Calu3 (cell line): ENCODE measurements at regions of chr17 and their contacts with region 1.

Region 1: DNA sequence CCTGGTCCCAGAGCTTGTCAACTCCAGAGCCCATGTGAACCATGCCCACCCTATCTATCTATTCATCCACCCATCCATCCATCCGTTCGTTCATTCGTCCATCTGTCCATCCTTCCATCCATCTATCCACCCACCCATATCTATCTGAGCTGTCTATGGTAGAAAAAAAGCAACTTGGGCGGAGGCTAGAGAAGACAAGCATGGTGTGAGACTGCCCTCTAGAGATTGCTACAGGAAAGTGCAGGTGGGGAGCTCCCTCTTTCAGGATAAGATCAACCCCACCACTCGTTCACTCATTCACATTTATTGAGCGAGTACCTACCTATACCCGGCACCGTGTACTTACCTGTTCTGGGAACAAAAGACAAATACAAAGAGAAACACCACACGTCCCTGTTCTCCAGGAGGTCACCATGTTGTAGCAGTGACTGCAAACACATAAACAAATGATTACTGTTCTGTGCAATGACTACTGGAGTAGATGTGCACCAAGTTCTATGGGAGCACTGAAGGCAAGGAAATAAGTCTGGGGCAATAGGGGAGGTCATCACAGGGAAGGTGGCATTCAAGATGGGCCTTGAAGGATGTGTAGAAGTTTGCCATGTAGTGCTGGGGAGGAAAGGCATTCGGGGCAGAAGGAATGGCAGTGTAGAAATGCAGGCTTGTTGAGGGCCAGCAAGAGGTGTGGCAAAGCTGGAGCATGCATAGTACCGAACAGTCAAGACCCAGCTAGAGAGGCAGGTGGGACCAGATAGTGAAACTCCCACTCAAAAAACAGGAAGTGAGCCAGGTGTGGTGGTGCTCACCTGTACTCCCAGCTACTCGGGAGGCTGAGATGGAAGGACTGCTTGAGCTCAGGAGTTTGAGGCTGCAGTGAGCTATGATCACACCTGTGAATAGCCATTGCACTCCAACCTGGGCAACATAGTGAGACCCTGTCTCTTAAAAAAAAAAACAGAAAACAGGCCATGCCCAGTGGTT is 13.4 kb upstream of the ATP5MC1 start:
- DNase-seq: peak; percentile 77
- H3K4me3 Mint-ChIP-seq: no peak overlapping the region
- H3K27ac Mint-ChIP-seq: no peak overlapping the region
- H3K4me1 Mint-ChIP-seq: no peaks in the 10 kb centered on the region
- H3K27me3 Mint-ChIP-seq: no peaks in the 10 kb centered on the region
- CTCF ChIP-seq: peak; percentile 96

Region 2: GRCh38 chr17:48671697-48672171 is 207.5 kb before region 1 on chr17:
- CTCF ChIA-PET with region 1: interaction called, 106 read pairs
- intact Hi-C with region 1: loop called (anchors 2 kb)
- DNase-seq: peak; percentile 86
- H3K4me3 Mint-ChIP-seq: peak overlapping the region; percentile 36
- H3K27ac Mint-ChIP-seq: no peak overlapping the region
- H3K4me1 Mint-ChIP-seq: no peaks in the 10 kb centered on the region
- H3K27me3 Mint-ChIP-seq: no peaks in the 10 kb centered on the region
- CTCF ChIP-seq: peak; percentile 95

Region 3: GRCh38 chr17:48693178-48693577 is 186.0 kb before region 1 on chr17:
- CTCF ChIA-PET with region 1: interaction called, 12 read pairs
- intact Hi-C with region 1: no loop called
- DNase-seq: no peak
- H3K4me3 Mint-ChIP-seq: no peak overlapping the region
- H3K27ac Mint-ChIP-seq: no peak overlapping the region
- H3K4me1 Mint-ChIP-seq: no peaks in the 10 kb centered on the region
- H3K27me3 Mint-ChIP-seq: peaks cover 13% of the 10 kb centered on the region
- CTCF ChIP-seq: no peak

Region 4: GRCh38 chr17:48791128-48792032 is 87.8 kb before region 1 on chr17:
- CTCF ChIA-PET with region 1: interaction called, 19 read pairs
- intact Hi-C with region 1: no loop called
- DNase-seq: peak; percentile 95
- H3K4me3 Mint-ChIP-seq: no peak overlapping the region
- H3K27ac Mint-ChIP-seq: peak overlapping the region; percentile 57
- H3K4me1 Mint-ChIP-seq: peaks cover 41% of the 10 kb centered on the region
- H3K27me3 Mint-ChIP-seq: peaks cover 25% of the 10 kb centered on the region
- CTCF ChIP-seq: peak; percentile 82

Region 5: GRCh38 chr17:48804925-48805411 is 74.2 kb before region 1 on chr17:
- CTCF ChIA-PET with region 1: interaction called, 84 read pairs
- intact Hi-C with region 1: loop called (anchors 1 kb)
- DNase-seq: peak; percentile 90
- H3K4me3 Mint-ChIP-seq: no peak overlapping the region
- H3K27ac Mint-ChIP-seq: no peak overlapping the region
- H3K4me1 Mint-ChIP-seq: peaks cover 38% of the 10 kb centered on the region
- H3K27me3 Mint-ChIP-seq: no peaks in the 10 kb centered on the region
- CTCF ChIP-seq: peak; percentile 99

Region 6: DNA sequence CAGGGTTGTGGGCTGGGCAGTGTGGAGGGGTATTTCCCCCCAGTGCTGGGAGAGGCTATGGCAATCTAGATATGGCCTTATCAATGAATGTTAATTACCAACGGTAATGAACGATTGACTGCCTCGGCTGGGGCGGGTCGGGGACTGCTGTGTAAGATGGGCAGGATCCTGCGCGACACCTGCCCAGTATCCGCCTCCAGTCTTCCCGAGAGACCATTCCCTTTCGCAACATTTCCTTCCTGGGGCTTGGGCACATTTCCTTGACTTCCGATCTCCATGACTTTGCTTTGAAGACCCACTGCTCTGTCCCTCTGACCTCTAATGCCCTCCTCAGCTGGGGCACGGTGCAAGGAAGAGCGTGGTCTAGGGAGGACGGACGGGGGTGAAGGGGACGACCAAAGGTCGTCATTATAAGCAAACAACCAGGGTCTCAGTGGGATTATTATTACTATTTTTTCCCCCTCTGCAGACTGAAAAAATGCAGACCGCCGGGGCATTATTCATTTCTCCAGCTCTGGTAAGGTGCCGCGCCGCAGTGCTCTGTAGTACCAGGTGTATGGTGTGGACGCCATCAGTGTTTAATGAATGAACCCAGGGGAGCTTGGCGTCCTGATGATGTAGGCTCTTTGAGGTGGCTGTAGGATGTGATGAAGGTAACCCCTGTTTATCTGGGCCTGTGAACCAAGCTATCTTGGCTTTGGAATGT is 13.9 kb after region 1 on chr17:
- CTCF ChIA-PET with region 1: interaction called, 13 read pairs
- intact Hi-C with region 1: no loop called
- DNase-seq: no peak
- H3K4me3 Mint-ChIP-seq: peak overlapping the region; percentile 98
- H3K27ac Mint-ChIP-seq: peak overlapping the region; percentile 98
- H3K4me1 Mint-ChIP-seq: peaks cover 7% of the 10 kb centered on the region
- H3K27me3 Mint-ChIP-seq: peaks cover 8% of the 10 kb centered on the region
- CTCF ChIP-seq: no peak

Region 7: GRCh38 chr17:48985436-48986245 is 106.4 kb after region 1 on chr17:
- CTCF ChIA-PET with region 1: no interaction called
- intact Hi-C with region 1: no loop called
- DNase-seq: no peak
- H3K4me3 Mint-ChIP-seq: no peak overlapping the region
- H3K27ac Mint-ChIP-seq: no peak overlapping the region
- H3K4me1 Mint-ChIP-seq: no peaks in the 10 kb centered on the region
- H3K27me3 Mint-ChIP-seq: peaks cover 29% of the 10 kb centered on the region
- CTCF ChIP-seq: no peak